Right ventricle myocardium inferior (tissue), 1 donor: ENCODE measurements at regions of chr2 and their contacts with region 1.

Region 1: GRCh38 chr2:30300456-30301221 is 69.3 kb downstream of the LBH start:
- DNase-seq: no peak
- ATAC-seq: peak; percentile 86

Region 2: DNA sequence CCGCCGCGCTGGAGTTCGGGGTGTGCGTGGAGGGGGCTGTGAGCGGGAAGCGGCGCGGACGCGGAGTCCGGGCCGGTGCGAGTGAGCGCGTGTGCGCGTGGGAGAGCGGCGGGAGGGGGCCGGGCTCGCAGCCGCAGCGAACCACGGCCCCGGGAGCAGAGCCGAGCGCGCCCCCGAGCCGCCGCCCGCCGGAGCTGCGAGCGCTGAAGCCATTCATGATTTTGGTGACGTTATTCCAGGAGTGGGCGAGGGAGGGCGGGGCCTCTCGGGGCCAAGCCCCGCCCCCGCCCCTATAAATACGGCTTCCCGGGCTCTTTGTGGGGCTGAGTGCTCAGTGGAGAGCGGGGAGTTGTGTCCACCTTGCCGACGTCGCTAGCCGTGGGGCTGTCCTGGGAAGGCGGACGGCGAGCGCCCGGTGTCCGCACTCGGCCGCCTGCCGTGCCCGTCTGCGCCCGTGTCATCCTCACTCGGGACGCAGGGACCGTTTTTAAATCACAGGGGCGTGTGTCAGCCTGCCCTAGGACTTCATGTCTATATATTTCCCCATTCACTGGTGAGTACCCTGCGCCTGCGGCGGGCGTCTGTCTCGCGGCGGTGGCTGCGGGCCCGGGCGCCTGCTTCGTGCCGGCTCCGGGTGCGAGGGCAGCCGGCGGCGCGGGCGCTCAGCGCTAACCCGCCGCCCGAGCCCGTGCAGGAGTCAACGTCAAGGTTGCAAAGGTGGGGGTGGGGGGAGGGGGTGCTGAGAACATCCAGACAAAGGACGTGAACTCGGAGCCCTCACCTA is 69.2 kb before region 1 on chr2 and contains the start of gene LBH:
- intact Hi-C with region 1: loop called (anchors 5 kb)
- DNase-seq: peak; percentile 92
- ATAC-seq: peak; percentile 83
- total RNA-seq, gene LBH: 133 TPM

Region 3: GRCh38 chr2:30252723-30253701 is 47.6 kb before region 1 on chr2:
- intact Hi-C with region 1: loop called (anchors 5 kb)
- DNase-seq: no peak
- ATAC-seq: peak; percentile 80

Region 4: GRCh38 chr2:30336978-30337841 is 36.6 kb after region 1 on chr2:
- intact Hi-C with region 1: loop called (anchors 5 kb)
- DNase-seq: no peak
- ATAC-seq: no peak

Region 5: DNA sequence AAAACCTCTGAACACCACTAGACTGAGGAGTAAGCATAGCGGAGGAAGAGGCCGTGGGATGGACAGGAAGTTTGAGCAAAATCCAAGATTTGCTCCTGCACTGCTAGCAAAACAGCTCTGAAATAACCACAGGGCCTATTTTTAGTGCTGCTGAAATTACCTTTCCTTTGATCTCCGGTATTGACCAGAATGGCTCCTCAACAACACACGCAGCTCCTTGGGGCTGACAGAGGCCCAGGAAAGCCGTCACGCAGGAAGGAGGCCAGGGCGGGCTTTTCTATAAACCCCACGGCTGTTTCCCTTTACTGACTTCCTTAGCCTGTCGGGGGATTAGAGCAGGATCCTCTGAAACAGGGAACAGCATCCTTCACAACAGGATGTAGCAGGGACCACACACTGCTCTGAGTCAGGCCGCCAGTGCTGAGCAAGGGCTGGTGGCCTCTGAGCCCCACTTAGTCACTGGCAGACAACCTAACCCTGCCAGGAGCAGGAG is 65.6 kb after region 1 on chr2:
- intact Hi-C with region 1: no loop called
- DNase-seq: no peak
- ATAC-seq: no peak